Prostate gland (tissue), 2 donors: ENCODE measurements at regions of chr17 and their contacts with region 1.

Region 1: DNA sequence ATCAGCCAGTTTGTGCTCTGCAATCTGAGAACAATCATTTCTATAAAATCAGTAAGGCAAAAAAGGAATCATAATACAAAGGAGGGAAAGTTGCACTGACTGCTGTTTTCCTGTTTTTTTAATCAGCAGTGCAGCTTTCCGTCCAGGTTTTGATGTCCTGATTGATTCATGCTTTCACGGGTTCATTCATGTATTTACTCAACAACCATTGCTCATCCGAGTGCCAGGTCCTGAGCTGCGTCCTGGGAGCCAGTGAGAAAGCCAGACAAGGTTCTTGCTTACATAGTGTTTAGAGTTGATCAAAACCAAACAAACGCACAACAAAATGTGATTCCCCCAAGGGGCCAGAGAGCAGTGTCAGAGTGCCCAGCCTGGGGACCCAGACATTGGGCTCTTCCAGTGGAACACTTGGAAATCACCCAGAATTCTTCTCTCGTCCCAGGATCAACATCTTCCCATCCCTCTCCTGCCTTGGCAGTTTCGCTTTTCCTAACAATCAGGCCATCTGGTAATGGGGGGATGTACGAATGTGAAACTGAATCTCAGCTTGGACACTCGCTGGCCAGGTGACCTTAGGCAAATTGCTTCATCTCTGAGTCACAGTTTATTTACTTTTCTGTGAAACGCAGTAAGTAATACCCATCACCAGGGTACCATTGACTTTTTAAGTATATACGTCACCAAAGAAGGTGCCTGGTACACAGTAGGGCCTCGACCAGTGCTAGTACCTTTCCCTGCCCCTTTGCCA is 13.3 kb upstream of the C1QL1 start:
- DNase-seq: no peak
- H3K4me3 ChIP-seq: no peak overlapping the region
- H3K27ac ChIP-seq: peak overlapping the region; percentile 2 to 35
- H3K4me1 ChIP-seq: no peaks in the 10 kb centered on the region
- H3K27me3 ChIP-seq: no peaks in the 10 kb centered on the region
- CTCF ChIP-seq: no peak
- POLR2A ChIP-seq: no peak

Region 2: GRCh38 chr17:44947461-44948314 is 33.7 kb before region 1 on chr17 and contains the start of gene KIF18B:
- intact Hi-C with region 1: no loop called
- DNase-seq: peak; percentile 85
- H3K4me3 ChIP-seq: peak within 1 kb of the TSS; percentile 43 to 45
- H3K27ac ChIP-seq: peak within 1 kb of the TSS in 1 of 2 donors; percentile 60
- H3K4me1 ChIP-seq: peaks cover 3% of the 10 kb centered on the region
- H3K27me3 ChIP-seq: no peaks in the 10 kb centered on the region
- CTCF ChIP-seq: peak in 1 of 4 experiments; percentile 11
- POLR2A ChIP-seq: peak; percentile 52
- total RNA-seq, gene KIF18B: 1.8 to 2.5 TPM

Region 3: GRCh38 chr17:45021607-45022287 is 40.4 kb after region 1 on chr17:
- intact Hi-C with region 1: loop called (anchors 2 kb)
- DNase-seq: peak; percentile 42
- H3K4me3 ChIP-seq: peak overlapping the region; percentile 15 to 25
- H3K27ac ChIP-seq: peak overlapping the region; percentile 58 to 79
- H3K4me1 ChIP-seq: peaks cover 13% of the 10 kb centered on the region
- H3K27me3 ChIP-seq: no peaks in the 10 kb centered on the region
- CTCF ChIP-seq: peak; percentile 85 to 97 (median 91)
- POLR2A ChIP-seq: no peak